ENCODE measurements at regions of chr10 and their contacts with region 1.

Region 1: DNA sequence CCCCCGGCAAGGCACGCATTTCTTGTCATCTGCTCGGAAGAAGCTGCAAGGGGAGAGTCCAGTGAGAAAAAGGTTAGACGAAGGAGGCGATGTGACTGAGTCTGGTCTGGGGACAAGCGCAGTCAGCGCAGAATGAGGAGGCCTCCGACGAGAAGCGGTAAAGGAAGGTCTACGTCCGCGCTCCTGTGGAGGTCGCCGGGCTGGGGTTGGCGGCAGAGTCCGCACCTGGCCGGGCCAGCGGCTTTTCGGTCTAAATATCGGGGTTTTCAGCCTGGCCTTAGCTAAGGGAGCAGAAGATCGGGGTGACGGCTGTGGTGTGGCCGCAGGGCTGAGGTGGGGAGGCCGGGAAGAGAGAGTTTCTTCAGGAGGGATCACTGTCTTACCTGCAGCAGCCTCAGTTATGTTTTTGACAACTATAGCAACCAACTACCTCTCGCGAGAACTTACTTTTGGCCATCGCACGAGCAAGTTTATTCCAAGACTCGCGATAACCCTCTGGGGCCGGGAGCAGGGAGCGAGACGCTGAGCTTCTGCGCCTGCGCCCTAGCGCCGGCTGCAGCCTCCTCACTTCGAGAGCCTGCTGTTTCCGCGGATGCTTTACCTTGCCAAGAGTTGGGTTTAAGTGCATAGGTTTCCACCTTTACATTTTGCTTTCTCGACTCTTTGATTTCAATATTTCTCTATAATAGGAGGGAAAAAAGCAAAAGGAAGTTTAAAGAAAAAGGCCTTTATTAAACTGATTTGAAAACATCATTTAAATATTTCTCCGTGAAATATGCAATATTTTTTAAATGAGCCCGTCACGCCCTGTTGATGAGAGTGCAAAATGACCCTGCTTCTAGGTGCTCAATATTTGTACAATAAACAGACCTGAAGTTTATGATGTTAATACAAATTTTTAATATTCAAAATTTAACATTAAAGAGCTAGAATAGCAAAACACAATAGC is at the start of gene CFAP70:
- DNase-seq: peak; percentile 77
- ATAC-seq: peak; percentile 98
- H3K4me3 Mint-ChIP-seq: peak within 1 kb of the TSS; percentile 97
- H3K27ac Mint-ChIP-seq: peak within 1 kb of the TSS; percentile 91
- H3K4me1 Mint-ChIP-seq: peaks cover 14% of the 10 kb centered on the region
- H3K27me3 Mint-ChIP-seq: peaks cover 2% of the 10 kb centered on the region
- CTCF ChIP-seq: no peak
- total RNA-seq, gene CFAP70: 1.2 and 1.7 TPM in 2 replicates

Region 2: DNA sequence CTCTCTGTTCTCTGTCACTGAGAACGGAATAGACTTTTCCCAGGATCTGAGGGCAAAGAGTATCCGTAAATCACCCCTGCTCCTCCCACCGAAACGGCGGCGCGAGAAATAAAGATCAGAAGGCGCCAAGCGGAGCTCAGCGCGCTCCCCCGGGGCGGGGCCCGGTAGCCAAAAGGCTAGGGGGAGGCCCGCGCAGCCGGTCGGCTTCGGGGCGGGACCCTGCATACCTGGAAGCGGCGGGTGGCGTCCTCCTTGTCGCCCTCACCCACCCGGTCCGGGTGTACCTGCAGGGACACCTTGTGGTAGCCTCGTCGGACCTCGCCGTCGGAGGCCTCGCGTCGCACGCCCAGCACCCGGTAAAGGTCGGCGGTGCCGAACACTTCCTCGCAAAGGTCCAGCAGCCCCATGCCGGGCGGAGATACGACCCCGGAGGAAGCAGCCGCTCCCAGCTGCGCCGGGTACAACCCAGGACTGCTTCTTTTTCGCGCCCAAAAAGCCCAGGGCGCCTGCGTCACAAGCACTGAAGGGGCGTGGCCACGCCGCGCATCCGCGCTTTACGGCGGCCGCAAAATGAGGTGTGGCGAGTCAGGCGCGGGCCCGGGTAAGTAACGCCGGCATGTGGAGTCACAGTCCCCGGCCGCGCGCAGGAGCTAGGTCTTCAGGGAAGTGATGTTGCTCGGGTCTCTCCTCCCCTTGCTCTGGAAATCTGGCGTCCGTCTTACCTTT is 111.7 kb before region 1 on chr10 and contains the start of gene DNAJC9:
- CTCF ChIA-PET with region 1: no interaction called
- POLR2A ChIA-PET with region 1: interaction called, 3 read pairs
- intact Hi-C with region 1: loop called (anchors 1 kb)
- DNase-seq: peak; percentile 99
- ATAC-seq: peak; percentile 84
- H3K4me3 Mint-ChIP-seq: peak within 1 kb of the TSS; percentile 93
- H3K27ac Mint-ChIP-seq: peak within 1 kb of the TSS; percentile 93
- H3K4me1 Mint-ChIP-seq: peaks cover 56% of the 10 kb centered on the region
- H3K27me3 Mint-ChIP-seq: no peaks in the 10 kb centered on the region
- CTCF ChIP-seq: no peak
- total RNA-seq, gene DNAJC9: 22.8 and 24.4 TPM in 2 replicates